BJ (cell line): ENCODE measurements at regions of chr10 and their contacts with region 1.

Region 1: GRCh38 chr10:104274762-104275721 is 6.1 kb downstream of the GSTO2 start:
- DNase-seq: no peak
- H3K4me3 ChIP-seq: peak overlapping the region; percentile 29
- H3K27me3 ChIP-seq: no peaks in the 10 kb centered on the region
- CTCF ChIP-seq: peak; percentile 97

Region 2: GRCh38 chr10:104254493-104255310 is 20.3 kb before region 1 on chr10 and contains the start of gene GSTO1:
- CTCF ChIA-PET with region 1: interaction called, 14 read pairs
- POLR2A ChIA-PET with region 1: no interaction called
- DNase-seq: no peak
- H3K4me3 ChIP-seq: peak within 1 kb of the TSS; percentile 85
- H3K27me3 ChIP-seq: peaks cover 1% of the 10 kb centered on the region; the same call in 1 of the 2 replicates
- CTCF ChIP-seq: peak; percentile 24; the same call in 1 of the 2 replicates
- polyA plus RNA-seq, gene GSTO1: 79.3 and 149 TPM in 2 replicates

Region 3: DNA sequence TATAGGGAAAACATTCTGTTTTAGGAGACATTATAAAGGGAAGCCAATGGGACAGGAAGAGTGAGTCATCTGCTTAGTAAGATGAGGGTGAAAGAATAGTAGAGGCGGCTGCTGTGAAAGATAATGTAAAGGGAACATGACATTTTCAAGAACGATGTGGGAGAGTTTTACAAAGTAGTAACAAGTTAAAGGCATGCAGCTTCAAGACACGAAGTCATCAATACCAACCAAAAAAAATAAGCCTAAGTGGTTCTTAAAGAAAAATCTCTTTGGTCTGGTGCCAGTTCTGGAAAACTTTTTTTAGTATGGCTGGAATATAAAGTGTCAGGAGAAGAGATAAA is 14.3 kb before region 1 on chr10:
- CTCF ChIA-PET with region 1: interaction called, 26 read pairs
- POLR2A ChIA-PET with region 1: no interaction called
- DNase-seq: no peak
- H3K4me3 ChIP-seq: no peak overlapping the region
- H3K27me3 ChIP-seq: no peaks in the 10 kb centered on the region
- CTCF ChIP-seq: no peak

Region 4: DNA sequence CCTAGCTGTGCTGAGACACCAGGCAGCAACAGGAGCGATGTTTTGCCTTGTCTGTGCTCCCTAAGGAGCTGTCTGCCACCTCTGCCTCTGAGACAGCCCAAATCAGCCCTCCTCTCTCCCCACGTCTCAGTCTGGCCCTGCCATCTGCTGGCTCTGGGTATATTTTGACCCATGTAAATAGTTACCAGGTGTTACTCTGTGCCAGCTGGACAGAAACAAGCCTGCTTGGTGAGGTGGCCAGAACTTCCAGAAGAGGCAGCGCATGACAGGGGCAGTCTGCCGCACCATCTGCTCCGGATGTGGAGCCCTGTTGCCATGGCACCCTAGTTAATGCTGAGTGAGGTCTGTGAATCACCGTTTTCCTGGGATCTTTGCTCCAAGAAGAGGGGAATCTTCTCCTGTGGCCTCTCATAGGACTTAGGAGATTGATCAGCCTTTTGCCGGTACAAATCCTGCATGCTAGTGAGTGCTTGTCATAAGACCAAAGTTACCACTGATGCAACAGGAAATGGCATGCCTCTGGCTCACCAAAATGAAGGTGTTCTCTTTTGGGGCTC is 25.8 kb after region 1 on chr10:
- CTCF ChIA-PET with region 1: interaction called, 16 read pairs
- POLR2A ChIA-PET with region 1: interaction called, 8 read pairs
- DNase-seq: peak; percentile 94
- H3K4me3 ChIP-seq: no peak overlapping the region
- H3K27me3 ChIP-seq: no peaks in the 10 kb centered on the region
- CTCF ChIP-seq: no peak

Region 5: GRCh38 chr10:104353325-104354048 is 78.4 kb after region 1 on chr10 and contains the start of gene CFAP58:
- CTCF ChIA-PET with region 1: interaction called, 46 read pairs
- POLR2A ChIA-PET with region 1: no interaction called
- DNase-seq: no peak
- H3K4me3 ChIP-seq: peak within 1 kb of the TSS; percentile 47
- H3K27me3 ChIP-seq: no peaks in the 10 kb centered on the region
- CTCF ChIP-seq: peak; percentile 82
- polyA plus RNA-seq, gene CFAP58: 0.23 and 0.37 TPM in 2 replicates